ENCODE measurements at regions of chr22 and their contacts with region 1.

Region 1: GRCh38 chr22:25406510-25407210 is 157.8 kb upstream of the GRK3 start:
- DNase-seq: no peak
- ATAC-seq: no peak
- H3K4me3 ChIP-seq: no peak overlapping the region
- H3K4me3 Mint-ChIP-seq: peak overlapping the region; percentile 74 to 82 (median 74)
- H3K27ac ChIP-seq: no peak overlapping the region
- H3K27ac Mint-ChIP-seq: peak overlapping the region in 1 of 2 donors; percentile 66
- H3K4me1 ChIP-seq: peaks cover 10 to 32% of the 10 kb centered on the region in 2 experiments
- H3K4me1 Mint-ChIP-seq: peaks cover 38% of the 10 kb centered on the region in 3 donors
- H3K27me3 ChIP-seq: no peaks in the 10 kb centered on the region
- H3K27me3 Mint-ChIP-seq: no peaks in the 10 kb centered on the region

Region 2: GRCh38 chr22:25110846-25111578 is 295.6 kb before region 1 on chr22:
- CTCF ChIA-PET with region 1: interaction called in 1 of 2 experiments, 15 read pairs
- POLR2A ChIA-PET with region 1: no interaction called
- DNase-seq: peak; percentile 15 to 76 (median 45)
- ATAC-seq: peak; percentile 82 to 89 (median 85)
- H3K4me3 ChIP-seq: peak overlapping the region; percentile 58 to 93
- H3K4me3 Mint-ChIP-seq: peak overlapping the region; percentile 81 to 86 (median 86)
- H3K27ac ChIP-seq: no peak overlapping the region
- H3K27ac Mint-ChIP-seq: peak overlapping the region; percentile 84 to 88
- H3K4me1 ChIP-seq: peaks cover 0 to 34% of the 10 kb centered on the region in 2 experiments
- H3K4me1 Mint-ChIP-seq: peaks cover 23 to 29% (median 26%) of the 10 kb centered on the region in 3 donors
- H3K27me3 ChIP-seq: peaks cover 0 to 5% of the 10 kb centered on the region in 2 experiments
- H3K27me3 Mint-ChIP-seq: no peaks in the 10 kb centered on the region

Measured in T-cell (primary cell).